Gastrocnemius medialis (tissue), 4 donors: ENCODE measurements at regions of chr20 and their contacts with region 1.

Region 1: GRCh38 chr20:57724619-57725405 is 15.0 kb upstream of the PMEPA1 start:
- DNase-seq: peak; percentile 60 to 89
- ATAC-seq: peak; percentile 78 to 97
- H3K4me3 ChIP-seq: no peak overlapping the region
- H3K27ac ChIP-seq: peak overlapping the region; percentile 40 to 66 (median 49)
- H3K4me1 ChIP-seq: peaks cover 9 to 14% of the 10 kb centered on the region in 2 donors
- H3K27me3 ChIP-seq: no peaks in the 10 kb centered on the region
- CTCF ChIP-seq: no peak
- POLR2A ChIP-seq: no peak

Region 2: DNA sequence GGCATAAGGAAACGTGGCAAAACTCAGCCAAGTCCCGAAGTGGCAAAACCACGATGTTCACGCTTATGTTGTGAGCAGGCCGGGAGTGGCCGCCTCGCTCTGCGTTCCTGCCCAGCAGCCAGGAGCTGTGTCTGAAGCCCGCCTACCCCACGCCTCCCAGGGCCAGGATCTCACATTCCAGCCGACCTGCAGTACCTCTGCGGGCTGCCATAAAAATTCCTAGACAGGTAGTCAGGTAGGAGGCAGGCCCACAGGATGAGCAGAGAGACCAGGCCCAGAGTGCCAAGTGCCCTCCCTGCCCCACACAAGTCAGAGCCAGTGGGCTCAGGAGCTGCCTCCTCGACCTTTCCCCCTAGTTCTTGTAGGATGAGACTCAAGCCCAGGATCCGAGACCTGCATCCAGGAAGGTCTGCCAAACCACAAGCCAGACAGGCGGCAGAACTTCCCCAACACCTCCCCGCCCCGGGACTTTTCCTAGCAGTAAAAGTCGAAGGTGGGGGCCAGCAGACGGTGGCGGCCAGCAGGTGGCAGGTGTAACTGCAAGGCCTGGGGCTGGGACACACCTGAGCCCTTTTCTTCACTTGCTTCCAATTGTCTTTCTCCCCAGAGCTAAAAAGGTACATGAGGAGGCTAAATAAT is 31.7 kb before region 1 on chr20:
- in situ Hi-C with region 1: no loop called
- intact Hi-C with region 1: no loop called
- DNase-seq: no peak
- ATAC-seq: peak in 1 of 2 donors; percentile 14
- H3K4me3 ChIP-seq: no peak overlapping the region
- H3K27ac ChIP-seq: no peak overlapping the region
- H3K4me1 ChIP-seq: peaks cover 22 to 31% of the 10 kb centered on the region in 2 donors
- H3K27me3 ChIP-seq: no peaks in the 10 kb centered on the region
- CTCF ChIP-seq: peak in 3 of 5 experiments; percentile 11 to 21 (median 20)
- POLR2A ChIP-seq: no peak

Region 3: DNA sequence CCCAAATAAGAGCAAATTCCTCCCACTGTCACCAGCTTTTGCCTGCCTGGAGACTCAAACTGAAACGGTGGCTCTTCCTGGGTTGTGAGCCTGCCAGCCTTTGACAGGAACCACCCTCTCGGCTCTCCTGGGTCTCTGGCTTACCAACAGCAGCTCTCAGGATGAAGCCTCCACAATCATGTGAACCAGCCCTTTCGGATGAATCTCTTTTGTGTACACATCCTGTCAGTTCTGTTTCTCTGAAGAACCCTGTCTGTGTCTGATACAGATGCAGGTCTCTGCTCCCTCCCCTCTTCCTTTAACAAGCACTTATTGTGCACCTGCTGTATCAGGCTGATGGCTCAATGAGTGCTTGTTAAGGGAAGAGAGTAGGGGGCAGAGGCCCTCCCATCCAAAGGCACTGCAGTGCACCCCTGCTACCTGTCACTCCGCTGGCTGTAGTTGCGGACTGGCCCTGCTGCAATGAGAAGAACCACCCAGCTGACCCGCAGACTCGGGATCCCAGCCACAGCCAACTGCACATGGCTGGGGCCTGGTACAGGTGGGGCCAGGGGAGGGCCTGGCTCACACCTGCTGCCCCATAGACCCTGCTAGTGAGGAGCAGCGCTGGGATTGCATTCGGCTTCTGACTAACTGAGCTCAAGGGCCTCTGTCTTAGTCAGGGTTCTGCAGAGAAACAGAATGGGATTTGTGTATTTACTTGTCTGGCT is 105.1 kb after region 1 on chr20:
- in situ Hi-C with region 1: loop called in 1 of 4 experiments (anchors 10 kb)
- intact Hi-C with region 1: no loop called
- DNase-seq: no peak
- ATAC-seq: no peak
- H3K4me3 ChIP-seq: no peak overlapping the region
- H3K27ac ChIP-seq: no peak overlapping the region
- H3K4me1 ChIP-seq: peaks cover 0 to 6% of the 10 kb centered on the region in 2 donors
- H3K27me3 ChIP-seq: no peaks in the 10 kb centered on the region
- CTCF ChIP-seq: no peak
- POLR2A ChIP-seq: no peak